Heart right ventricle (tissue), 16 donors: ENCODE measurements at regions of chr12 and their contacts with region 1.

Region 1: GRCh38 chr12:133130038-133130807 is at the starts of genes ZNF10 and ZNF891:
- DNase-seq: peak; percentile 95 to 98
- ATAC-seq: peak; percentile 96 to 100 (median 98)
- H3K4me3 ChIP-seq: peak within 1 kb of the TSS; percentile 73 to 93 (median 84)
- H3K27ac ChIP-seq: peak within 1 kb of the TSS; percentile 89 to 97 (median 92)
- H3K4me1 ChIP-seq: peaks cover 0 to 19% (median 12%) of the 10 kb centered on the region in 9 donors
- H3K27me3 ChIP-seq: no peaks in the 10 kb centered on the region
- CTCF ChIP-seq: peak in 1 of 9 donors; percentile 10
- total RNA-seq, gene ZNF10: 6.5 to 10.5 (median 9.5) TPM
- total RNA-seq, gene ZNF891: 0.64 to 1.2 (median 0.88) TPM

Region 2: GRCh38 chr12:131896080-131896810 is 1234.0 kb before region 1 on chr12:
- intact Hi-C with region 1: no loop called
- DNase-seq: peak; percentile 91
- ATAC-seq: peak; percentile 83 to 94 (median 89)
- H3K4me3 ChIP-seq: peak overlapping the region; percentile 40 to 85 (median 64)
- H3K27ac ChIP-seq: peak overlapping the region; percentile 94 to 99 (median 98)
- H3K4me1 ChIP-seq: peaks cover 11 to 53% (median 39%) of the 10 kb centered on the region in 9 donors
- H3K27me3 ChIP-seq: no peaks in the 10 kb centered on the region
- CTCF ChIP-seq: no peak

Region 3: GRCh38 chr12:132117558-132117875 is 1012.7 kb before region 1 on chr12:
- intact Hi-C with region 1: no loop called
- DNase-seq: no peak
- ATAC-seq: peak in 1 of 8 donors; percentile 23
- H3K4me3 ChIP-seq: no peak overlapping the region
- H3K27ac ChIP-seq: no peak overlapping the region
- H3K4me1 ChIP-seq: no peaks in the 10 kb centered on the region
- H3K27me3 ChIP-seq: no peaks in the 10 kb centered on the region
- CTCF ChIP-seq: no peak

Region 4: DNA sequence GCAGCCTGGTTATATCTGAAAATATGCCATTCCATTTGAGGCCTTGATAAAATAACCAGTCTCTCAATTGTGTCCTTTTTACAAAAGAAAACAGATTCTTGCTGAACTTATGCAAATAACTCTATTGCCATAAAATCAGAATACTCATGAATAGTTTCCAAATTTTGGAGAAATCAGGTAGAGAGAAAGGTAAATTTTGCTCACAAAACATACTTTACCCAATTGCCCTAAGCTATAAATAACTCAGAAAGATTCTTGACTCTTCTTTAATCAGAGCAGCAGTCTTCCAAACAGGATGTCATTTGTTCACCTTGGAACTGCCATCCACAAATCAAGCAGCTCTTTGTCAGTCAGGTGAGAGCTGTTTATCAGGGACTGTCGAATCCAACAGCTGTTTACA is 131.5 kb before region 1 on chr12:
- intact Hi-C with region 1: no loop called
- DNase-seq: no peak
- ATAC-seq: no peak
- H3K4me3 ChIP-seq: no peak overlapping the region
- H3K27ac ChIP-seq: no peak overlapping the region
- H3K4me1 ChIP-seq: no peaks in the 10 kb centered on the region
- H3K27me3 ChIP-seq: no peaks in the 10 kb centered on the region
- CTCF ChIP-seq: no peak

Region 5: GRCh38 chr12:133037207-133038005 is 92.8 kb before region 1 on chr12 and contains the start of gene ZNF84:
- intact Hi-C with region 1: loop called in 1 of 10 experiments (anchors 2 kb)
- DNase-seq: peak; percentile 95 to 97
- ATAC-seq: peak; percentile 98 to 100 (median 99)
- H3K4me3 ChIP-seq: peak within 1 kb of the TSS; percentile 53 to 90 (median 77)
- H3K27ac ChIP-seq: peak within 1 kb of the TSS; percentile 52 to 96 (median 93)
- H3K4me1 ChIP-seq: peaks cover 0 to 14% (median 8%) of the 10 kb centered on the region in 9 donors
- H3K27me3 ChIP-seq: no peaks in the 10 kb centered on the region
- CTCF ChIP-seq: peak in 1 of 9 donors; percentile 4
- total RNA-seq, gene ZNF84: 13.3 to 23.0 (median 18.3) TPM

Region 6: DNA sequence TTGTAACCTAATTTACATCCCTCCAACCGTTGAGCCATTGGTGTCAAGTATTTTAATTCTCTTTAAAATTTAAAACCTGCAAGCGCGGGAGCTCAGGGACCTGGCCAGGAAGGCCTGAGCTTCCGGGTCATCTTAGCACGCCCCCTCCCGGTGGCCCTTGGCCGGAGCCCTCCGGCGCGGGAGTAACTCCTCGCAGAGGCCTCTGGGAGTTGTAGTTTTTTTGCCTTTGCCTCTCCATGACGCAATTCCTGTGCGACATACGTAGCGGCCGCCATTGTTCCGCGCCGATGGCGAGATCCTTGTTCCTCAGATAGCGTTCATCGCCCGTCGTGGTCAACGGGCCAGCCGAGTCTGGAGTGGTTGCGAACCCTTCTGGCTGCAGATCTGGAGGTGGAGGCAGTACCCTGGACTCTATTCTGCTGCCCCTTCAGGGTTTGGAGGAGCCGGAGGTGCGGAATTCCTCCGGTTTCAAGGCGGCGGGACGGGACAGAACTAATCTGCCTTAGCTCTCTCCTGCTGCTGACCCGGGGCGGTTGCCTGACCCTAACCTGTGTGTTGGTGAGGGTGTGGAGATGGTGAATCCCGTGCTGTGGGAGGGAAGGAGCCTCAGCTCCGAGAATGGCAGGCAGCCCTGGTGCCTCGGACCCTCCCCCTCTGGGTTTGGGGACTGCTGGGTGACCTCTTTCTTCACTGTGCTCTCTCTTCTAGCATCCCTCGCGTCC is 51.2 kb after region 1 on chr12 and contains the start of gene ZNF268:
- intact Hi-C with region 1: loop called in 1 of 10 experiments (anchors 2 kb)
- DNase-seq: peak; percentile 92 to 95
- ATAC-seq: peak; percentile 96 to 98 (median 98)
- H3K4me3 ChIP-seq: peak within 1 kb of the TSS; percentile 57 to 96 (median 86)
- H3K27ac ChIP-seq: peak within 1 kb of the TSS in 9 of 10 donors; percentile 35 to 85 (median 69)
- H3K4me1 ChIP-seq: peaks cover 0 to 12% (median 7%) of the 10 kb centered on the region in 9 donors
- H3K27me3 ChIP-seq: no peaks in the 10 kb centered on the region
- CTCF ChIP-seq: peak; percentile 66 to 95 (median 90)
- total RNA-seq, gene ZNF268: 7.0 to 13.5 (median 11.5) TPM